ENCODE measurements at regions of chr2 and their contacts with region 1.

Region 1: GRCh38 chr2:237256887-237257286 is 157.1 kb downstream of the COL6A3 start:
- DNase-seq: no peak
- H3K4me3 ChIP-seq: no peak overlapping the region
- H3K27ac ChIP-seq: no peak overlapping the region
- H3K4me1 ChIP-seq: peaks cover 0 to 4% (median 0%) of the 10 kb centered on the region in 4 experiments; a peak in 1 of 7 replicates
- H3K27me3 ChIP-seq: no peaks in the 10 kb centered on the region
- CTCF ChIP-seq: no peak
- EP300 ChIP-seq: no peak
- POLR2A ChIP-seq: no peak
- RAD21 ChIP-seq: no peak

Region 2: GRCh38 chr2:237269138-237269875 is 12.4 kb after region 1 on chr2:
- CTCF ChIA-PET with region 1: interaction called, 21 read pairs
- POLR2A ChIA-PET with region 1: no interaction called
- DNase-seq: no peak
- H3K4me3 ChIP-seq: no peak overlapping the region
- H3K27ac ChIP-seq: no peak overlapping the region
- H3K4me1 ChIP-seq: no peaks in the 10 kb centered on the region; a peak in 1 of 7 replicates
- H3K27me3 ChIP-seq: no peaks in the 10 kb centered on the region
- CTCF ChIP-seq: no peak
- EP300 ChIP-seq: no peak
- POLR2A ChIP-seq: no peak
- RAD21 ChIP-seq: no peak

Region 3: DNA sequence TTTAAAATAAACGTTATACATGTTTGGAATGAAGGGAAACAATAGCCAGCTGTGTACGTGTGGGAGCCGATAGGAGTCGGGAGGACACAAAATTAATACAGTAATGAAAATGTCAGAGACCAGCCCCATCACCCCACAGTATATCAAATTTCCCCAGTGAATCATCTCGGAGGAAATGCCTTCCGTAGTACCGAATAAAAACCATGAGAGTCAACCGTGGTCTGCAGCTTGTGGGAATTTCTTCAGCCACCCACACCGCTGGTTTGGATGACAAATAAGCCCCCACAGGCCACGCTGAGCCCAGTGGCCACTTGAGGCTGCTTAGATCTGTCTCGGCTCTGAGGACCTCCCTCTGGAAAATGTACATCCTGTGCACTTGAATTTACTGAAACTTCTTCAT is 23.3 kb after region 1 on chr2:
- CTCF ChIA-PET with region 1: no interaction called
- POLR2A ChIA-PET with region 1: no interaction called
- DNase-seq: no peak
- H3K4me3 ChIP-seq: no peak overlapping the region
- H3K27ac ChIP-seq: no peak overlapping the region
- H3K4me1 ChIP-seq: no peaks in the 10 kb centered on the region
- H3K27me3 ChIP-seq: no peaks in the 10 kb centered on the region; a peak in 1 of 7 replicates
- CTCF ChIP-seq: no peak
- EP300 ChIP-seq: no peak
- POLR2A ChIP-seq: no peak
- RAD21 ChIP-seq: no peak

Measured in H1 (cell line).